ENCODE measurements at regions of chr19 and their contacts with region 1.

Region 1: DNA sequence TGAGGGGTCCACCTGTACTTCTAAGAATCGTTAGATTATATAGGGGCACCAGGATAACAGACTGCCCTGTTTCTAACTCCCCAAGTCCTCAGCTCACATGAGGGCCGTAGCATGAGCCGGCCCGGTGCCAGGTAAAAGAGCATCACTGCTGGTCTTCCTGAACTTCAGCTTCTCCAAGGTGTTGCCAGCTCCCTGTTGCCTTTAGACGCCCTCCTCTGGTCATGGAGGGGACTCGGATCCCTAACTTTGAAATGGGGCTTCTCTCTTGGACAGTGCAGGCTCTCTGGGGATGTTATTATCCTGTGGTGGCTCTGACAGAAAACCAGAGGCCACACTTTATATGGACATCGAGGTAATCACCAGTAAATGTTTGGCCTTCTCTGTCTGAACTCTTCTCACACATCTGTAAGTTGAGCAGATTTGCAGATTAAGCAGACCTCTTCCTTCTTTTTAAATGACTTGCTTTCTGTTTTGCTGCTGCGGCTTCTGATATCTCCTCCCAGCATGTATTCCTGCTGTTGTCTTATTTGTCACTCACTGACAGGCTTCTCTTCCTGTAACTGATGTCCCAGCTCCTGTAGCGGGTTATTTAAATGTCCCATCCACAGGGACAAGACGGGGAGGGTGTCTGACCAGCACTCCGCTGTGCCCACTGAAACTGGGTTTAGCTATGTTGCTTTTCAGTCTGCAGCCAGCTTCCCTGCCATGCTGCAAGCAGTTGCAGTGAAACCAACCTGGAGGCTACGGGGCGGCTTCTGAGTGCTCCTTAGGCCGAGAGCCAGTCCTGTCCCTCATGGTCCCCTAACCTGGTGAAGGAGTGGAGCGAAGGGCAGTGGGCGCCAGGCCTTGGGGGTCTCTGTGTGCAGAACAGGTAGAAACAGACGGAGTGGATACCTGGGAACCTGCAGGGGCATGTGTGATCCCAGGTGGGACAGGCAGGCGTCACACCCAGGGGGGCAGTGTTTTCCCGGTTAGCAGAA is 39.2 kb downstream of the TSSK6 start:
- DNase-seq: peak; percentile 34
- H3K4me3 ChIP-seq: no peak overlapping the region
- H3K27ac ChIP-seq: no peak overlapping the region
- H3K4me1 ChIP-seq: no peaks in the 10 kb centered on the region
- H3K27me3 ChIP-seq: no peaks in the 10 kb centered on the region
- CTCF ChIP-seq: peak; percentile 29 to 57

Region 2: GRCh38 chr19:19329126-19329525 is 147.0 kb before region 1 on chr19:
- CTCF ChIA-PET with region 1: interaction called, 12 read pairs
- dilution Hi-C with region 1: no loop called
- in situ Hi-C with region 1: no loop called
- intact Hi-C with region 1: no loop called
- DNase-seq: no peak
- H3K4me3 ChIP-seq: no peak overlapping the region
- H3K27ac ChIP-seq: no peak overlapping the region
- H3K4me1 ChIP-seq: peaks cover 1% of the 10 kb centered on the region
- H3K27me3 ChIP-seq: no peaks in the 10 kb centered on the region
- CTCF ChIP-seq: no peak

Region 3: DNA sequence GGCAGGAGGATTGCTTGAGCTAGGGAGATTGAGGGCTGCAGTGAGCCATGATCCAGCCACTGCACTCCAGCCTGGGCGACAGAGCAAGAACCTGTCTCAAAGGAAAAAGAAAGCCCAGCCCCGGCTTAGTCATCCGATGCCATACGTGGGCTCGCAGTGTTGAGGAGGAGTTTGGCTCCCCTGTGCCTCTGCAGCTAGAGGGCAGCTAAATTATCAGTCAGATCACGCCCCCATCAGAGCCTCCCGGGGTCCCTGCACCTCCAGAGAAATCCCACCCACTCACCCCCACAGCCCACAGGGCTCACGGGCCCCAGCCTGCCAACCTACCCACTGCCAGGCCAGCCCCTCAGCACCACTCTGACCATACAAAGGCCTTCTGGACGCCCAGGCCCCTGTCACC is 127.9 kb before region 1 on chr19:
- CTCF ChIA-PET with region 1: no interaction called
- dilution Hi-C with region 1: no loop called
- in situ Hi-C with region 1: no loop called
- intact Hi-C with region 1: no loop called
- DNase-seq: peak; percentile 34
- H3K4me3 ChIP-seq: no peak overlapping the region
- H3K27ac ChIP-seq: no peak overlapping the region
- H3K4me1 ChIP-seq: peaks cover 6% of the 10 kb centered on the region
- H3K27me3 ChIP-seq: no peaks in the 10 kb centered on the region
- CTCF ChIP-seq: no peak

Region 4: GRCh38 chr19:19385108-19385899 is 90.8 kb before region 1 on chr19:
- CTCF ChIA-PET with region 1: no interaction called
- dilution Hi-C with region 1: no loop called
- in situ Hi-C with region 1: loop called in 1 of 2 experiments (anchors 10 kb)
- intact Hi-C with region 1: no loop called
- DNase-seq: peak; percentile 100
- H3K4me3 ChIP-seq: peak overlapping the region; percentile 84 to 85 (median 84)
- H3K27ac ChIP-seq: peak overlapping the region; percentile 31
- H3K4me1 ChIP-seq: peaks cover 27% of the 10 kb centered on the region
- H3K27me3 ChIP-seq: no peaks in the 10 kb centered on the region
- CTCF ChIP-seq: no peak

Measured in mammary epithelial cell (primary cell).